Heart left ventricle (tissue), 16 donors: ENCODE measurements at regions of chr2 and their contacts with region 1.

Region 1: DNA sequence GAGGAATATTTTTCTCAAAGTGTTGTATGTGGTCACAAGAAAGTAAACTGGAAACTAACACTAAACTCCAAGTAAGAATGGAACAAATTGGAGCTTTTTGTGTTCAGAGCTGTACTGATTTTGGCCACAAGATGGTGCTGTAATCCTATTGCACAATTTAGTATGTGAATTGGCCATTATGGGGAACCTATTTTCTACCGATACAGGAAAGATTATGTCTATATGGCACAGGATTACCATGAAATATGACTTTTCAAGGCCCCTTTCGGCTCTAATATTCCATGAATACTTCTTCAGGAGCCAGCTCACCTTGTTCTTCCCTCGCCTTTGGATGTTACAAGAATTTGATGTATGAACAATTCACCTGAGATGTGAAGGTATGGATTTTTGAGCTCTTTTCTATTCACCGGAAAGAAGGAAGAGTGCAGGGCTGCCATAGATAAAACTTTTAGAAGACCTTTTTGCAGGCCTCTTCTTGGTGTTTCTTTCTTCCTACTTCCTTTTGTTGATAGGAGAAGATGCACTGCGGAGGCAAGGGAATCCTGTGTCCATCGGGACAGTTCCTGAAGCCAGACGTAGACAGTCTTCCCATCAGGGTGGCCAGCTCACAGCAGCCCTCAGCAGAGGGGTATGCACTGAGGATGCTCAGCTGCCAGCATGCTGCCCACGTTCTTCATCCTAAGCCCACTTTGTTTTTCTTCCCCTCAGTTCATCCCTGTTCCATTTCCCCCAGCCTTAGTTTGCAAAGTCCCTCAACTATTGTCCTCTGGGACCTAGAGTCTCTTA is 13.3 kb downstream of the MRPL44 start:
- DNase-seq: peak in 2 of 5 donors; percentile 26 to 29
- ATAC-seq: peak in 3 of 4 donors; percentile 46 to 55 (median 49)
- H3K4me3 ChIP-seq: no peak overlapping the region
- H3K27ac ChIP-seq: no peak overlapping the region
- H3K4me1 ChIP-seq: peaks cover 0 to 11% (median 0%) of the 10 kb centered on the region in 12 donors
- H3K27me3 ChIP-seq: no peaks in the 10 kb centered on the region
- CTCF ChIP-seq: peak; percentile 80 to 98 (median 92)
- POLR2A ChIP-seq: no peak

Region 2: GRCh38 chr2:223846525-223846924 is 124.0 kb before region 1 on chr2:
- intact Hi-C with region 1: no loop called
- DNase-seq: no peak
- ATAC-seq: no peak
- H3K4me3 ChIP-seq: no peak overlapping the region
- H3K27ac ChIP-seq: no peak overlapping the region
- H3K4me1 ChIP-seq: no peaks in the 10 kb centered on the region
- H3K27me3 ChIP-seq: no peaks in the 10 kb centered on the region
- CTCF ChIP-seq: no peak
- POLR2A ChIP-seq: no peak

Region 3: GRCh38 chr2:224284134-224284946 is 313.8 kb after region 1 on chr2:
- intact Hi-C with region 1: loop called (anchors 1 to 5 kb)
- DNase-seq: no peak
- ATAC-seq: peak in 1 of 4 donors; percentile 47
- H3K4me3 ChIP-seq: no peak overlapping the region
- H3K27ac ChIP-seq: no peak overlapping the region
- H3K4me1 ChIP-seq: peaks cover 0 to 15% (median 0%) of the 10 kb centered on the region in 12 donors
- H3K27me3 ChIP-seq: peaks cover 0 to 16% (median 2%) of the 10 kb centered on the region in 9 donors
- CTCF ChIP-seq: peak; percentile 53 to 84 (median 66)
- POLR2A ChIP-seq: no peak

Region 4: DNA sequence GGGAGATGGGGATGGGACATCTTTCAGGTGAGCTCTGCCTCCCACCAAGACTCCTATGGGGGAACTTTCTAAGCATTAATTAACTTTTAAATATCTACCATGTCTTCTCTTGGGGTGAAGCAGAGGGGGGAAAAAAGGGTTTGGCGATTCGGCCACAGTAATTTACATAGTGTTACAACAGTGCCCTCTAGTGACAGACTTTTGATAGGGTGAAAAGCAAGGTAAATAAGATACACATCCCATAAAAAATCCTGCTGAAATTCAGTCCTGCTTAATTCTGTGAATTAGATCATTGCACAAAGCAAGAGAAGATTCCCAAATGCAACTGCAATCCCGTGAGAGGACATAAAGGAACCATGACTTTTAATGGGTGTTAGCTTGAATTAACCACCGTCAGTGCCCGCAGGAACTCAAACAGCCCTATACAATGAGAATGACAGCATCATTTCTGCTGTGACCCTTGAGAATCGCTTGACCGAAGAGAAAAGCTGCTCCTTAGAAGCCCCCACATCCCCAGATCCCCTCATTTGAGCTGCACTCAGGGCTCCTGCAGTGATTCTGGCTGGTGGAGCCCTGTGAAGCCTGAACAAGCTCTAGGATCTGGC is 398.6 kb after region 1 on chr2:
- intact Hi-C with region 1: loop called in 2 of 10 experiments (anchors 5 to 10 kb)
- DNase-seq: no peak
- ATAC-seq: peak in 1 of 4 donors; percentile 39
- H3K4me3 ChIP-seq: no peak overlapping the region
- H3K27ac ChIP-seq: no peak overlapping the region
- H3K4me1 ChIP-seq: no peaks in the 10 kb centered on the region
- H3K27me3 ChIP-seq: no peaks in the 10 kb centered on the region
- CTCF ChIP-seq: peak; percentile 51 to 81 (median 65)
- POLR2A ChIP-seq: no peak

Region 5: DNA sequence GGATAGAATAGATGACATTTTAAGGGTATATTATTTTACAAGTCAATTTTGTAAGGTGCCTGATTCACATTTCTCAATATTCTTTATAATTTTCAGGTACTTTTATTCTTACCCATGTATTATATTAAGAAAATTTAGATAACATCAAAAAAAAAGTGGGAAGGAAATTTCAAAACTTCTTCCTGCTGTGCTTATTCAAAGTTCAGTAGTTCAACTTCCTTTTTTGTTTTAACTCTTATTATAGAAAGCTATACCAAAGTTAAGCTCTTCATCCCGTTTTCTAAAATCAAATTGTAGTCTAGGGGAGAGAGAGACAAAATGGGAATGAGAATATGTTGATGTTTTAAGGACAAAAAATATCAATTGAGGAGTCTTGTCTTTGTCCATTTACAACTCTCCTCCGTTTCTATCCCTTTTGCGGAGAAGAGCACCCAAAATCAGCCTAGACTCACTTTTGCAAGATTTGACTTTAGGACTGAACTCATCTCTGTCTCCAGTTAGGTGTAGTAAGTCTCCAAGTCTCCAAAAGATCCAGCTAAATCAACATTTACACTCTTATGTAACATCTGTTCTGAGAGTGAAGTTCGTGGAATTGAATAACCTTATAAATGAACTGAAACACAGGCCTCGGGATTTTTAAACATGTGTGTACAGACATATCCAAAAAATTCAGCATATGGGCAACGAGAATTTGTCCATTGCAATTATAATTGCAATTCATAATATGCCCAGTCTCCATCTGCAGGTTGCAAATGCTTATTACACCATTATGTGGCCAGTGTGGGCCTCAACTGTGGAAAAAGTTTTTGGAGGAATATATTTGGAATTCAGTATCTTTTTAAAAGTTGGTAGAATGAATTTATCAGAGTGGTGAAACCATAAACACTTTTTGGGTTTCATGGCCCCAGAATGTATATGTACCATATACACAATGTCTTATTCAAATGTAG is 407.5 kb after region 1 on chr2:
- intact Hi-C with region 1: loop called in 1 of 10 experiments (anchors 10 kb)
- DNase-seq: no peak
- ATAC-seq: no peak
- H3K4me3 ChIP-seq: no peak overlapping the region
- H3K27ac ChIP-seq: peak overlapping the region in 1 of 12 donors; percentile 51
- H3K4me1 ChIP-seq: peaks cover 0 to 34% (median 7%) of the 10 kb centered on the region in 12 donors
- H3K27me3 ChIP-seq: no peaks in the 10 kb centered on the region
- CTCF ChIP-seq: peak in 3 of 12 donors; percentile 5 to 19 (median 14)
- POLR2A ChIP-seq: no peak

Region 6: DNA sequence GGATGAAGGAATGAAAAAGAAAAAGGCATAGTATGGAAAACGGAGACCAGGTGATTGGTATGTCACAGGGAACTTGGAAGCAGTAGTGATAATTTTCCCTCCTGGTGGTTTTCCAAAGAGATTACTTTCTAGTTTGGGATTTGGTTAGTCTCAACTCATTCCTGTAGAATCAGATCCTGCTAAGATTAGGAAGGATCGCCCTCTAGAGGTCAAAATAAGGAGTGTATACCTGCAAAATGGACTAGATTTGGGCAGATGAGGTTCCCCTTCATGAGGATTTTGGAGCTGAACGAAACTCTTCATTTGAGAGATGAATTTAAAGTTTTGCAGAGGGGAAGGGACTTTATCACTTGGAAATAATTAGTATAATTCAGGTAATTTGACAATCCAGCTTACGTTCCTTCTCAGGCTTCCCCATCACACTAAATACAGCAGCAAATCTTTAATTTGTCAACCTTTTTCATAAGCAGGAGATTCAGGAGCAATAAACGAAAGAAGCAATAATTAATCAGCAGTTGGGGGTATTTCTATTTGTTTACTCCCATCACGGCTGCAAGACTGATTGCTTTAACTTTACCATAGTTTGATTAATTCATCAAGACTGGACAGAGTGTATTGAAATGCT is 680.4 kb after region 1 on chr2:
- intact Hi-C with region 1: loop called in 1 of 10 experiments (anchors 5 kb)
- DNase-seq: no peak
- ATAC-seq: peak in 2 of 4 donors; percentile 52 to 73
- H3K4me3 ChIP-seq: no peak overlapping the region
- H3K27ac ChIP-seq: no peak overlapping the region
- H3K4me1 ChIP-seq: peaks cover 0 to 3% (median 0%) of the 10 kb centered on the region in 12 donors
- H3K27me3 ChIP-seq: peaks cover 0 to 8% (median 0%) of the 10 kb centered on the region in 9 donors
- CTCF ChIP-seq: peak; percentile 67 to 83 (median 77)
- POLR2A ChIP-seq: no peak

Region 7: DNA sequence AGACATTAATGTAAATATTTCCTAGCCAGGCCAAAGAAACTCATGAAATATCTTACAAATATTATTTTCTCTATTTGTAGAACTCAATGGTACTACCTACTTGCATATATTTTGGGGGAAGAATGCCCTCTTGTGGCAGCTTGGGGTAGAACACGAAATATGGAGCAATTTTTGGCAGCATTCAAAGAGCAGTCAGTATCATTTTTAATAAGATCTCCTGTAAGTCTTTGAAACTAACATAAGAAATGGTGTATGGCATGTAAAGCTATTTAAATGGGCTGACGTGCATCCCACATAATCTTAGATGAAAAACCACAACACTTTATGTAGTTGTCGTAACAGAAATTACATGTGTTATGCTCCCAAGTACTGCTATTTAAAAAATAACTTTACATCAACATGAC is 807.9 kb after region 1 on chr2:
- intact Hi-C with region 1: loop called in 1 of 10 experiments (anchors 2 kb)
- DNase-seq: peak in 1 of 5 donors; percentile 15
- ATAC-seq: peak in 1 of 4 donors; percentile 52
- H3K4me3 ChIP-seq: no peak overlapping the region
- H3K27ac ChIP-seq: no peak overlapping the region
- H3K4me1 ChIP-seq: no peaks in the 10 kb centered on the region
- H3K27me3 ChIP-seq: no peaks in the 10 kb centered on the region
- CTCF ChIP-seq: peak; percentile 66 to 84 (median 76)
- POLR2A ChIP-seq: no peak